Activated CD4-positive, alpha-beta T cell treated with anti-CD3 and anti-CD28 coated beads for 36 hours (primary cell): ENCODE measurements at regions of chr6 and their contacts with region 1.

Region 1: GRCh38 chr6:150016324-150017185 is 8.8 kb downstream of the RAET1L start:
- DNase-seq: peak; percentile 64
- ATAC-seq: peak; percentile 75
- H3K4me3 Mint-ChIP-seq: no peak overlapping the region
- H3K27ac Mint-ChIP-seq: no peak overlapping the region
- H3K4me1 Mint-ChIP-seq: peaks cover 19% of the 10 kb centered on the region
- H3K27me3 Mint-ChIP-seq: peaks cover 70% of the 10 kb centered on the region

Region 2: DNA sequence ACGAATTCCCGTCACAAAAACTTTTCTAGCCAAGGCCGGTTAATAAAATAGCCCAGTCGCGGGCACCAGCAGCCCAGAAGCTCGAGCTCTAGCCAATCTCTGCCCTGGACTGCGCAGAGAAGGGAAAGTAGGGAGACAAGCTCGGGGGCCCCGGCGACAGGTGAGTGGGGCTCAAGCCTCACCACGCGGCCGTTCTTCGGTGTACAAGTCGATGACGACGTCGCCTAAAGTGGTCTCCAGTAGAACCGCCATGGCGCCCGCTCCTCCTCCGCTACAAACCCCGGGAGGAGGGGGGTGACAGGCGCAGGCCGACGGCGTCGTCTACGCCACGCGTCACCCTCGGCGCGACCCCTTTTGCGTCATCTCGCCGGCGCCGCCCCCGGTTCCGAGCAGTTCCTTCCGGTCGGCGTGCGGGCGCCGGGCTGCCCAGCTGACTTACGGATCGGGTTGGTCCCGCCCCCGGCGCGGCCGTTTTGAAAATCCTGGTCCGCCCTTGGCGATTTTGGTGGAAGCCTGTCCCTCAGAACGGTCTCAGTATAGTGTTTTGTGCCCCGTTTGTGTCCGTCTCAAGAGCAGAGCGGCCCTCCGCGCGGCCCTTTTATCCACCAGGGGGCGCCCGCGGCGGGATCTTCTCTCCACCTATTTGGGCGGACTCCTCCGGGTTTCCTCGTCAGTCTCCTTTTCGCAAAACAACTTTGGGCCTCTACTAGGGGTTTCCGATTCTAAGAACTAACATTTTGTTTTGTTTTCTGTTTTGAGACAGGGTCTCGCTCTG is 470.6 kb before region 1 on chr6 and contains the start of gene PPIL4:
- CTCF ChIA-PET with region 1: no interaction called
- POLR2A ChIA-PET with region 1: no interaction called
- intact Hi-C with region 1: loop called in 1 of 2 experiments (anchors 5 kb)
- DNase-seq: peak; percentile 98
- ATAC-seq: peak; percentile 85
- H3K4me3 Mint-ChIP-seq: peak within 1 kb of the TSS; percentile 97
- H3K27ac Mint-ChIP-seq: peak within 1 kb of the TSS; percentile 98
- H3K4me1 Mint-ChIP-seq: peaks cover 42% of the 10 kb centered on the region
- H3K27me3 Mint-ChIP-seq: no peaks in the 10 kb centered on the region
- total RNA-seq, gene PPIL4: 22.6 to 26.8 TPM

Region 3: DNA sequence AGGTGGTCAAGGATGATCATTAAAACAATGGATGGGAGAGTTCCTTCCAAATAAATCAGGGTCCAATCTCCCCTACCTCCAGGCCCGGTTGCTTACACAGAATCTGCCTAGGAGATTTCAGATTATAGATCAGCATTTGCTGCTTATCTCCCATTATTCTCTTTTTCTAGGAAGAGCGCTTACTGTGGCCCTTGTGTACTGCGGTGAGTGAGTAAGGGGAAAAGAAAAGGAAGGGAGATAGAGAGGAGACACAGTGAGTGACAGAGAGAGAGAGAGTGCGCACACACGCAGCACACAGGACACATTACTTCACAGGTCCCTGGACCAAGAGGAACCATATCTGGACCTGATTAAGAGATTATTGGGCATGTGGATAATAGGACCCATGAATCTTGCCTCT is 304.8 kb before region 1 on chr6:
- CTCF ChIA-PET with region 1: no interaction called
- POLR2A ChIA-PET with region 1: no interaction called
- intact Hi-C with region 1: no loop called
- DNase-seq: no peak
- ATAC-seq: no peak
- H3K4me3 Mint-ChIP-seq: no peak overlapping the region
- H3K27ac Mint-ChIP-seq: peak overlapping the region; percentile 38
- H3K4me1 Mint-ChIP-seq: peaks cover 58% of the 10 kb centered on the region
- H3K27me3 Mint-ChIP-seq: no peaks in the 10 kb centered on the region

Region 4: DNA sequence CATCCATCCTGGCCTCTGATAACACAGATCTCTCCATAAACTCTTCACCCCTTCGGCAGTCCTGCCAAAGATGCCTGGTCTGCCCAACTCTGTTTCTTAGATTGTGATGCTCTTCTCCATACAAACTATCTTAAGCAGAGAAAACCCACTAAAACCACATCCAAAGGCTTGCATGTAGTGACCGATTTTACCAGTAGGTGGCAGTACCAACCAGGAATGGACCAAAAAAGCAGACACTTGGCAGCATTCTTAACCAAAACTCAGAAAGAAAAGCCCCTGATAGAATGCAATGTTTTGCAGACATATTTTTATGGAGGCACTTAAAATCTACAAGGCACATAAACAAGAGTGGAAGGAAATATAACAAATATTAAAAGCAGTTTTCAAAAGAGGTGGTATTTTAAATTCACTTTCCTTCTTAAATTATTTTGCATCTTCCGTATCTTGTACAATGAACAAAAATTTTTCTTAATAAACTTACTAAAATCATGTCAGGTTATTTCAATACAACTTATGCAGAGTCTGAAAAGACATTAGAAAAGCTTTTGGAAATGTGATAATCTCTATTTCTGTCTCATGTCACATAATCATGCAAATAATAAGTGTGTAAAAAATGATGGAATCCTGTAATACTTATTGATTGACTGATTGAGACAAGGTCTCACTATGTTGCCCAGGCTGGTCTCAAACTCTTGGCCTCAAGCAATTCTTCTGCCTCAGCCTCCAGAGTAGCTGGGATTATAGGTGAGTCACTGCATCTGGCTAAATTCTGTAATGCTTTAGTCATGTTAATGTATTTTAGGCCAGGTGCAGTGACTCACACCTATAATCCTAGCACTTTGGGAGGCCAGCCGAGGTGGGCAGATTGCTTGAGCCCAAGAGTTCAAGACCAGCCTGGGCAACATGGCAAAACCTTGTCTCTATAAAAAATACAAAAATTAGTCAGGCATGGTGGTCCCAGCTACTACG is 181.8 kb before region 1 on chr6:
- CTCF ChIA-PET with region 1: interaction called, 9 read pairs
- POLR2A ChIA-PET with region 1: no interaction called
- intact Hi-C with region 1: loop called (anchors 1 to 2 kb)
- DNase-seq: peak; percentile 78
- ATAC-seq: peak; percentile 66
- H3K4me3 Mint-ChIP-seq: no peak overlapping the region
- H3K27ac Mint-ChIP-seq: no peak overlapping the region
- H3K4me1 Mint-ChIP-seq: no peaks in the 10 kb centered on the region
- H3K27me3 Mint-ChIP-seq: no peaks in the 10 kb centered on the region

Region 5: DNA sequence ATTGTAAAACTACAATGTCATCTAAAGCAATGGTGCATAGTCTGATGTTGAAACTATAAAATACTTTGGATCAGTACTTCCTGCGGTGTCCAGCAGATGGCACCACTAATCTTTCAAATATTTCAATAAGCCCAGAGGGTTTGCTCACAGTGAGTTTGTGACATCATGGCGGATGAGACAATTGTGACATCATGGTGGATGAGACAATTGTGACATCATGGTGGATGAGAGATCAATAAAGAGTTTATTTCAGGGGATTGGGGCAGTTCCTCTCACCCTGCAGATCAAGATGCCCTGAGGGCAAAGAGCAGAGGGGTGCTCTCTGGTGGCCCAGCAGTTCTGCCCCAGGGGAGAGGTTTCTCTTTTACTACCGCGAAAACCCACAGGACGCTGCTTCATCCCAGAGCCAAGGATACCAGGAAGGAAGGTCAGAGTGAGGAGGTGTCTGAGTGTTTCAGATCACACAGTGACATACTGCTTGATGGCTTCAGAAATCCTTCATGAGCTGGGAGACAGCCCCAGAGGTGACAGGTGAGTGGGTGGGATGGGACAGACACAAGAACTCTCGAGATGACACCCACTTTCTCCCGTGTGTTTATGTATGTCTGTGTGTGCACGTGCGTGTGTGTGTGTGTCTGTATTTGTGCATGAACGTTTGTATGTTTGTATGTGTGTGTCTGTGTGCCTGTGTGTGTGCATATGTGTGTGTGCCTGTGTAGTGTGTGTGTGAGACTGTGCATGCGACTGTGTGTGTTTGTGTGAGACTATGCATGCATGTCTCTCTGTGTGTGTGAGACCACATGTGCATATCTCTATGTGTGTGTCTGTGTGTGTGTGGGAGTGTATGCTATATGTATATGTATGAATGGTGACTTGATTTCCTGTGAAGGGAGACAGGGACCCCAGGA is 82.1 kb before region 1 on chr6:
- CTCF ChIA-PET with region 1: interaction called, 24 read pairs
- POLR2A ChIA-PET with region 1: no interaction called
- intact Hi-C with region 1: loop called (anchors 1 kb)
- DNase-seq: peak; percentile 84
- ATAC-seq: peak; percentile 57
- H3K4me3 Mint-ChIP-seq: no peak overlapping the region
- H3K27ac Mint-ChIP-seq: no peak overlapping the region
- H3K4me1 Mint-ChIP-seq: peaks cover 21% of the 10 kb centered on the region
- H3K27me3 Mint-ChIP-seq: peaks cover 74% of the 10 kb centered on the region

Region 6: DNA sequence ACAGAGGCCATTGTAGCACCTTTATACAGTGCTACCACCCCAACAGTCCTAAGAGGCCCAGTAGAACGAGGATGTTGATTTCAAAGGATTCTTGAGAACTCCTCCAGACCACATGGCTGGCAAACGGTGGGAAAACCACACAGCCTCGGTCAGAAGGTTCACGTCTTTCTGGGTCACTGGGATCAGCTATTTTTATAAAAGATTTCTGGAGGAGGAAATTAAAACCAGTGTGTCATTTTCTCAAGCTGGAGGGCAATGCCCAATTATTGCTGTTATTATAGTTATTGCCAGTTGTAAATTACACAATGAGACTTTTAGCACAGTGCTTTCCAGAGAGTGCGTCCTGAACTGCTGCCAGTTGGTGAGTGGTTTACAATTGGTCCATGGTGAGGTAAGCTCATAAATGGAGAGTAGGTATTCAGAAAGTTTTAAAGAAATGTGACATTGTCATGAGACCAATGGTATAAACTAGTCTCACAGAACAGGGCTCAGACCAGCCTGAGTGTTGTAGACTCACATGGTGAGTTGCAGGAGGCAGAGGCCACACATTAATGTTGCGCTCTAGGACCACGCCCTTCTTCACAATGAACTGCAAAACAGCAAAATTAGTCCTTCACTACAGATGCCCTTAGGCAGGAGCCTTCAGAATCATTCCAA is 117.9 kb after region 1 on chr6:
- CTCF ChIA-PET with region 1: no interaction called
- POLR2A ChIA-PET with region 1: no interaction called
- intact Hi-C with region 1: no loop called
- DNase-seq: no peak
- ATAC-seq: no peak
- H3K4me3 Mint-ChIP-seq: no peak overlapping the region
- H3K27ac Mint-ChIP-seq: no peak overlapping the region
- H3K4me1 Mint-ChIP-seq: peaks cover 4% of the 10 kb centered on the region
- H3K27me3 Mint-ChIP-seq: peaks cover 28% of the 10 kb centered on the region